ENCODE measurements at regions of chr5 and their contacts with region 1.

Region 1: GRCh38 chr5:66987949-66988838 is 208.4 kb downstream of the CD180 start:
- DNase-seq: no peak
- H3K4me3 ChIP-seq: no peak overlapping the region
- H3K27ac ChIP-seq: no peak overlapping the region
- H3K4me1 ChIP-seq: peaks cover 45% of the 10 kb centered on the region
- H3K27me3 ChIP-seq: no peaks in the 10 kb centered on the region
- CTCF ChIP-seq: peak; percentile 86

Region 2: GRCh38 chr5:67095346-67096171 is 107.4 kb after region 1 on chr5:
- intact Hi-C with region 1: loop called (anchors 10 kb)
- DNase-seq: peak; percentile 80
- H3K4me3 ChIP-seq: peak overlapping the region; percentile 49
- H3K27ac ChIP-seq: peak overlapping the region; percentile 88
- H3K4me1 ChIP-seq: peaks cover 68% of the 10 kb centered on the region
- H3K27me3 ChIP-seq: no peaks in the 10 kb centered on the region
- CTCF ChIP-seq: no peak

Region 3: DNA sequence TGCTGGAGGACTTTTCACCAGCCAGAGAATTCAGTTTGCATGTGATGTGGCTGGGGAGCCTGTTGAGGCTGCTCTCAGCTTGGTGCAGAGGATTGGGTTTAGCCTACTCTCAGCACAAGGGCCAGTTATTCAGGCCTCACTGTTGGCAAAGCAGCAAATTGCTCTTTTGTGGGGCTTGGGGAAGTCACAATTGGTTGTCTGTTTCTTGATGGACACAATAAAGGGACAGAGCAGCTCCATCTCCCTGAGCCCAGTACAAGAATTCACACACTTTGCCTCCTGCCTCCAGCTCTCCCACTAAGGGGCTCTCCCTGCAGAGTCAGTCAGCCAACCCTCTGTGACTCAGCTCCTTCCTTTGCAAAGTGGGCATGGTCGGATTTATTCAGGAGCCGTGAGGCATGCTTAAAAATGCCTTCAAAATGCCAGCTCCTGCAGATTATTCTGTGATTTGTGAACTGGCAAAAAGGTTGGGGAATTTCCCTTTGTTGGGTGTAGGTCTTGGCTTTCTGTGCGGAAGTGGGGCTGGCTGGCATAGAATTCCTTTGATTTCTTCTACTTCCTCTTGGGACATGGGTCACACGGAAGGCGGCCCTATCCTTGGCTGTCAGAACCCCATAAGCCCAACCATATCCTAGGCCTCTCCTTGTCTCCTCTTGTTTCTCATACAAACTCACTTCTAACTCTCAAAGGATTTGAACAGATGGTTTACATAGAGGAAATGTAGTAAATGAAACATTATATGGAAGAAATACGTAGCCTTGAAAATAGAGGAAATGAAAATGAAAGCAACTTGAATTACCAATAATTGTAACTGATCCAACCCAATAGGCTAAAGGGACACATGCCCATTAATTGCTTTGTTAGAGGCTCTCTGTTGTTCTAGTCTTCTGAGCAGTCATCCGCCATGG is 327.1 kb after region 1 on chr5:
- intact Hi-C with region 1: no loop called
- DNase-seq: no peak
- H3K4me3 ChIP-seq: no peak overlapping the region
- H3K27ac ChIP-seq: peak overlapping the region; percentile 34
- H3K4me1 ChIP-seq: no peaks in the 10 kb centered on the region
- H3K27me3 ChIP-seq: no peaks in the 10 kb centered on the region
- CTCF ChIP-seq: no peak